MCF 10A (cell line): ENCODE measurements at regions of chr19 and their contacts with region 1.

Region 1: DNA sequence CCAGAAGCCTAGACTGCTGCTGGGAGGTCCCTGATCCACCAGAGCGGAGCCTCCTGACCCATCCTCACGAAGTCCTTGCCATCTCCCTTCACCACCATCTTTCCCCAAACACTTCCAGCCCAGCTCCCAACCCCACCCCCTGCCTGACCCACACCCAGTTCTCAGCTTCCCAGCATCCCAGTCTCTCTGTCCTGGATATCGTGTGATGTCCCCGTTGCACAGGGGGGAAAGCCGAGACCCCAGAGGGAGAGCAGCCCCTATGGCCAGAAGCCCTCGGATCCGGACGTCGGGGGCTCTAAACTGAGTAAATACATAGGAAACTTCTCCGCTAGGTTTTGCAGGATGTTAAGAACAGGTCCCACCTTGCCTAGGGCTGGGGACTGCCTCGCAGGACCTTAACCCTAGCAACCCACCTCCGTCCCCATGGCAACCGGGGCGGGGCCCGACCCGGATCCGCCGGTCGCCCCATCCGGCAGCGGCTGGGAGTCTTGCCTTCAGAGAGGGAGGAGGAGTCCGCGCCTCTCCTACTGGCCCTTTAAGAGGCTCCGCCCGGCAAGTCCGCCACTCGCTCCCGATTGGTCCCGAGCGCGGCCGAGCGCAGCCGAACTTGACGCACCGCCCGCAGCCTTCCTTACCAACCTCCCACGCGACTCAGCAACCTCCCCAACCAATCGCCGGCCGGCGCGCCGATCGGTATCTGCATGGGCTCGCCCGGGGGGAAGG is 451 bp upstream of the HMG20B start:
- DNase-seq: peak; percentile 100
- H3K4me3 Mint-ChIP-seq: peak overlapping the region; percentile 79
- H3K27ac Mint-ChIP-seq: no peak overlapping the region
- H3K4me1 Mint-ChIP-seq: peaks cover 4% of the 10 kb centered on the region
- H3K27me3 Mint-ChIP-seq: no peaks in the 10 kb centered on the region
- CTCF ChIP-seq: no peak

Region 2: GRCh38 chr19:3591876-3592613 is 19.8 kb after region 1 on chr19:
- CTCF ChIA-PET with region 1: interaction called, 3 read pairs
- POLR2A ChIA-PET with region 1: interaction called, 12 read pairs
- intact Hi-C with region 1: no loop called
- DNase-seq: no peak
- H3K4me3 Mint-ChIP-seq: no peak overlapping the region
- H3K27ac Mint-ChIP-seq: no peak overlapping the region
- H3K4me1 Mint-ChIP-seq: no peaks in the 10 kb centered on the region
- H3K27me3 Mint-ChIP-seq: no peaks in the 10 kb centered on the region
- CTCF ChIP-seq: no peak